IMR-90 (cell line): ENCODE measurements at regions of chr7 and their contacts with region 1.

Region 1: DNA sequence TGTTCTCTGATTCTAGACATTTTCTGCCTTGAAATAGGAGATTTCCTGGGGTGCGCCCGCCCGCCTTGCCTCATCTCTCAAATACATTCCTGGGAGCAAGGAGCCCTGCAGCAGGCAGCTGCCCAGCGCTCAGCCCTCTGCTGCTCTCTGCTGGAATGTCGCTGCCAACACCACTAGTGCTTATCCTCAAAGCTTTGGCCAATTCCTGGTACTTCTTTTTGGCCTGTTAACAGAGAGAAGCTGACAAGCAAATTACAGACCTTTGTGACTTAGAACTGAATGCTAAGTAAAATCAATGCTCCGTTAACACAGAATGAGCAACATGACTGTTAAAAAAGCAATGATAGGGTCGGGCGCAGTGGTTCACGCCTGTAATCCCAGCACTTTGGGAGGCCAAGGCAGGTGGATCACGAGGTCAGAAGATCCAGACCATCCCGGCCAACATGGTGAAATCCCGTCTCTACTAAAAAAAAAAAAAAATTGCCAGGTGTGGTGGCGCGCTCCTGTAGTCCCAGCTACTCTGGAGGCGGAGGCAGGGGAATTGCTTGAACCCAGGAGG is 41.9 kb upstream of the SYPL1 start:
- DNase-seq: peak; percentile 75
- ATAC-seq: peak; percentile 100
- H3K4me3 ChIP-seq: no peak overlapping the region
- H3K27ac ChIP-seq: no peak overlapping the region
- H3K4me1 ChIP-seq: no peaks in the 10 kb centered on the region
- H3K27me3 ChIP-seq: peaks cover 25% of the 10 kb centered on the region
- CTCF ChIP-seq: peak; percentile 98
- POLR2A ChIP-seq: peak; percentile 47; the same call in 1 of the 2 replicates
- RAD21 ChIP-seq: peak; percentile 99

Region 2: DNA sequence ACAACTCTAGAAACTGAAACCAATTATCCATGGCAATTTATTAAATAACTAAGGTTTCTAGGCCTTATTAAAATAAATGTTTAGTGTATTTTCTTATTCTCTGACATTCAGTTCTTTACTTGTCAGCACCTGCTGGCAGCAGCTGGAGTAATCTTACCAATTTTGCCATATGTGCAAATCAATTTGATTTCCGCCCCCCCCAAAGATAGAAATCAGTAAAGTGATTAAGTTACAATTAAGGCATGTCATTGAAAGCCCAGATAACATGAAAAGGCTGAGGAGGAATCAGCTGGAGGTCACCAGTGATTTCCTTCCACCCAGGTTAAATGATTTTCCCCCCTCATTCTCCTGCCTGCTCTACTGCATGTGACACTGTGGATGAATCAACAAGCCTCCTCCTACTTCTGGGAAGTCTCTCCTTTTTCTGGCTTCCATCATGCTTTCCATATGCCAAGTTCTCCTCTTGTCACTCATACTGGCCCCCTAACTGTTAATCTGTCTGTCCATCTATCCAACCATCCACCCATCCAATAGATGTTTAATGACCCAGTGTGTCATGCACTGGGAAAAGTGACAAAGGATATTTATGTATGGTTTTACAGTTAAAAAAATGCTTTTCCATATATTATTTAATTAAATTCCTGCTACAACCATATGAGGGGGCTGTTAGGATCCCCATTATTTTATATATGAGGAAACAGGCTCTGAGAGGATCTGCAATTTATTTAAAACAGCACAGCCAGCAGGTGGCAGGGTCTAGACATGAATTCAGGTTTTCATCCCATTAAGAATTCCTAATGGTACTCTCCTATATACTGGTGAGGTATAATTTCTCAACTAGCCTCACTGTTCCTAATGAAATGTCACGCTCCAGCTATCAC is 394.1 kb before region 1 on chr7:
- CTCF ChIA-PET with region 1: no interaction called
- POLR2A ChIA-PET with region 1: no interaction called
- dilution Hi-C with region 1: no loop called
- in situ Hi-C with region 1: loop called (anchors 10 kb)
- intact Hi-C with region 1: loop called (anchors 2 kb)
- DNase-seq: peak; percentile 71
- ATAC-seq: peak; percentile 76
- H3K4me3 ChIP-seq: no peak overlapping the region
- H3K27ac ChIP-seq: peak overlapping the region; percentile 77; the same call in 1 of the 2 replicates
- H3K4me1 ChIP-seq: peaks cover 14% of the 10 kb centered on the region
- H3K27me3 ChIP-seq: no peaks in the 10 kb centered on the region
- CTCF ChIP-seq: peak; percentile 74
- POLR2A ChIP-seq: no peak
- RAD21 ChIP-seq: peak; percentile 81

Region 3: GRCh38 chr7:105934572-105935185 is 219.3 kb before region 1 on chr7:
- CTCF ChIA-PET with region 1: interaction called, 3 read pairs
- POLR2A ChIA-PET with region 1: no interaction called
- dilution Hi-C with region 1: no loop called
- in situ Hi-C with region 1: no loop called
- intact Hi-C with region 1: loop called (anchors 5 kb)
- DNase-seq: peak; percentile 47
- ATAC-seq: peak; percentile 71
- H3K4me3 ChIP-seq: no peak overlapping the region
- H3K27ac ChIP-seq: no peak overlapping the region
- H3K4me1 ChIP-seq: peaks cover 6% of the 10 kb centered on the region; the same call in 1 of the 2 replicates
- H3K27me3 ChIP-seq: peaks cover 4% of the 10 kb centered on the region
- CTCF ChIP-seq: peak; percentile 48
- POLR2A ChIP-seq: no peak
- RAD21 ChIP-seq: peak; percentile 36; the same call in 1 of the 2 replicates

Region 4: GRCh38 chr7:106056513-106057203 is 97.3 kb before region 1 on chr7:
- CTCF ChIA-PET with region 1: interaction called, 18 read pairs
- POLR2A ChIA-PET with region 1: no interaction called
- dilution Hi-C with region 1: no loop called
- in situ Hi-C with region 1: loop called (anchors 5 kb)
- intact Hi-C with region 1: loop called (anchors 1 kb)
- DNase-seq: peak; percentile 69
- ATAC-seq: peak; percentile 100
- H3K4me3 ChIP-seq: no peak overlapping the region
- H3K27ac ChIP-seq: no peak overlapping the region
- H3K4me1 ChIP-seq: no peaks in the 10 kb centered on the region
- H3K27me3 ChIP-seq: peaks cover 14% of the 10 kb centered on the region
- CTCF ChIP-seq: peak; percentile 85
- POLR2A ChIP-seq: 0 out of 2 replicates have a peak, but pooled peaks have one; percentile 35
- RAD21 ChIP-seq: peak; percentile 93

Region 5: GRCh38 chr7:106243893-106244292 is 89.9 kb after region 1 on chr7:
- CTCF ChIA-PET with region 1: no interaction called
- POLR2A ChIA-PET with region 1: no interaction called
- dilution Hi-C with region 1: no loop called
- in situ Hi-C with region 1: no loop called
- intact Hi-C with region 1: no loop called
- DNase-seq: no peak
- ATAC-seq: no peak
- H3K4me3 ChIP-seq: no peak overlapping the region
- H3K27ac ChIP-seq: no peak overlapping the region
- H3K4me1 ChIP-seq: no peaks in the 10 kb centered on the region
- H3K27me3 ChIP-seq: no peaks in the 10 kb centered on the region
- CTCF ChIP-seq: no peak
- POLR2A ChIP-seq: no peak
- RAD21 ChIP-seq: no peak